Sciatic nerve (tissue), 2 donors: ENCODE measurements at regions of chr5 and their contacts with region 1.

Region 1: DNA sequence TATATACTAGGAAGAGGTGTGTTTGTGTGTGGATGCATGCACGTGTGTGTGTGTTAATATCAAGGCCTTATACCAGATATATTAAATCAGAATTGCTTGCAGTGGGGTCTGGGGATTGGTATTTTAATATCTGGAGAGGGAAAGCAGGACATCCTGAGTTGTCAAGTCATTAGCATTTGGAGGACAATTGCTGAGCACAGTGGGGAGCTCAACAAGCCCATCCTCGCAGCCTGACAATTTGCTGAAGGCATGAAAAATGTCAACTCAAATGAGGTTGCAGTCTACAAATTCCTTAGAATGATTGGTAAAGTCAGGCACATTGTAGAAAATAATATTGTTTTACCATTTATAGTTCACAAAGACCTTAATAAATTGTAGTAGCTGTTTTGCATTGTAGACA is 627.4 kb downstream of the LRRC70 start:
- DNase-seq: no peak
- ATAC-seq: no peak

Region 2: GRCh38 chr5:62708481-62709325 is 497.3 kb before region 1 on chr5:
- intact Hi-C with region 1: no loop called
- DNase-seq: no peak
- ATAC-seq: no peak

Region 3: DNA sequence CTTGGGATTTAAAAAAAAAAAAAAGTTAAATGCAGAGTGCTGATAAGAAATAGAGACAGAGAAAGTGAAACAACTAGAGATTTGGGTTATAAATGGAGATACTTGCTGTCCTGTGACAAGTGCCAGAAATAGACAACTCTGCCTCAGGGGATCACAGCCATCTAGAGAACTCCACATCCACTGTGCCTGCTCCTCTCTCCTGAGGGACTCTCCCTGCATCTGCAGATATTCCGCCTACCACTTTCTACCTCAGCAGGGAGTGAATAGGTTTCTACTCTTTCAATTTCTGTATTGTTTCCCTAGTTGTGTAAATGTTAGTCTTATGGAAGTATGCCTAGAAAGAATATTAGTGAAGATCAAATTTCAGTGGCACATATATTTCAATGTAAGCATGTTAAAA is 449.1 kb after region 1 on chr5:
- intact Hi-C with region 1: no loop called
- DNase-seq: no peak
- ATAC-seq: no peak

Region 4: DNA sequence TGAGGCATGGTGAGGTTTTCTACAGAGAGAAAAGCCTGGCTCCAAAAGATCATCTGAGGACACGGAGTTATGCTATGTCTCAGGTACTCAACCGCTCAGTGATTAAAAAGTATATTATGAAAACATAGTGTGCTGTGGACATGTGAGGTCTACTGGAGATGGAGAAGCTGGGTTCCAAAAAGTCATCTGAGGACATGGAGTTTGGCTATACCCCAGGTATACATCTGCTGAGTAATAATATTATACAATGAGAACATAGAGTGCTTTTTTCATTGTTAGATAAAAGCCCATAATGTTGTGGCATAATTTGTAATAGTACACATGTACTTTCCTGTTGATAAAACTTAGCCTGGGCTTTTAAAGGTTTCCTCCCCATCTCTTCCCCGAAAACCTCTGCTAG is 1413.6 kb after region 1 on chr5:
- intact Hi-C with region 1: loop called (anchors 5 kb)
- DNase-seq: no peak
- ATAC-seq: no peak